ENCODE measurements at regions of chr15 and their contacts with region 1.

Region 1: DNA sequence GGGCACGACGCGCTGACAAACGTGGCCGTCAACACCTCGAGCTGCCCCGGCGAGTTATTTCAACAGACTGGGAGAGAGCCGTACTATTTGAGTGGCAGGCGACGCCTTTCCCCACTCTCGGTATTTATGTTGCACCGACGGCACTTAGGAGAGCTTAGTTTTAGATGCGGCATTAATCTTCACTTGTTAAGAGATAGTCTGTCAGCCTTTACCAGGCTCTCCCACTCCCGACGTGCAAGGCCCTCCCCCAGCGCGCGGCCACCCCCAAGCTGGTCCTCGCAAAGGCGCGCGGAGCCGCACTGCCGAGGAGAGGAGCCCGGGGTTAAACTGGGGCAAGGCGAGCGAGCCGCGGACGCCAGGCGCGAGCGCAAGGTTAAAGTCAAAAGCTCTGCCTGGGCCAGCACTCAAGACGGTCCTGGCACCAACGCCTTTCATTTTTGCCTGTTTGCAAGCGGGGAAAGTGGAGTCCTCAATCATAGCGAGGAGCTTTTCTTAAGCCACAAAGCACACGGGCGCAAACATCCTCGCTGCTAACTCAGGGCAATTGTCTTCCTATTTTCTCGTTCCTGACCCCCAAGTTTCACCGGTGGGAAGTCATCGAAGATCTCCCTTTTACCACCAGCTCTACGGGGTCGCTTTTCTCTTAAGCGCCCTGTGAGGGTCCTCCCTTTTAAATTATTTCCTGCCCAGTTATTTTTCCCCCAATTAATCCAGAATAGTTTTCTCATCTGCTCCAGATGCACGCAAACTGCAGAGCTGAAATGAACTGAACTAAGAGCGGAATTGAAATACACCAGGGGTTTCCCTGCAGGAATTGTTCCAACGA is 86.6 kb downstream of the NR2F2 start:
- DNase-seq: no peak
- ATAC-seq: no peak
- H3K4me3 ChIP-seq: no peak overlapping the region
- H3K27ac ChIP-seq: no peak overlapping the region
- H3K4me1 ChIP-seq: no peaks in the 10 kb centered on the region
- H3K27me3 ChIP-seq: peaks cover 0 to 2% of the 10 kb centered on the region in 2 donors

Region 2: GRCh38 chr15:96374499-96374898 is 42.6 kb before region 1 on chr15:
- intact Hi-C with region 1: loop called in 1 of 2 experiments (anchors 5 kb)
- DNase-seq: no peak
- ATAC-seq: no peak
- H3K4me3 ChIP-seq: no peak overlapping the region
- H3K27ac ChIP-seq: no peak overlapping the region
- H3K4me1 ChIP-seq: no peaks in the 10 kb centered on the region
- H3K27me3 ChIP-seq: no peaks in the 10 kb centered on the region